H1 (cell line): ENCODE measurements at regions of chr18 and their contacts with region 1.

Region 1: DNA sequence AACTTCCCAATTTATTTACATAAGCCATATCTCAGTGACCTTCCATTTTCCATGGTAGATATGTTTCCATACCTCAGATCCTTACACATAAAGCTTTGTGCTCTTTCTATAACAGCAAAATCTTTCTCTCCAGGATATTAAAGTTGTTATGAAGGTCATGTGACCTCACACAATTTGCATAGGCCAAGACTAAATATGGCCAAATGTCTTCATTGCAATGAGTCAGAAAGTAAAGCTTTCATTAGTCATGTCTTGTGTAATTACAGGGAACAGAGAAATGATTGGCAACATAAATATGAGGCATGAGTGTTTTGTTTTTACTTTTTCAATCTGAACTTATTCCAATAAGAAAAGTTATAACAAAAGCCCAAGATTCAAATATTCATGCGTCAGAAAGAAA is 243.5 kb downstream of the ASXL3 start:
- DNase-seq: no peak
- H3K4me3 ChIP-seq: no peak overlapping the region
- H3K27ac ChIP-seq: no peak overlapping the region
- H3K4me1 ChIP-seq: no peaks in the 10 kb centered on the region
- H3K27me3 ChIP-seq: no peaks in the 10 kb centered on the region
- CTCF ChIP-seq: no peak
- EP300 ChIP-seq: no peak
- POLR2A ChIP-seq: no peak
- RAD21 ChIP-seq: no peak

Region 2: DNA sequence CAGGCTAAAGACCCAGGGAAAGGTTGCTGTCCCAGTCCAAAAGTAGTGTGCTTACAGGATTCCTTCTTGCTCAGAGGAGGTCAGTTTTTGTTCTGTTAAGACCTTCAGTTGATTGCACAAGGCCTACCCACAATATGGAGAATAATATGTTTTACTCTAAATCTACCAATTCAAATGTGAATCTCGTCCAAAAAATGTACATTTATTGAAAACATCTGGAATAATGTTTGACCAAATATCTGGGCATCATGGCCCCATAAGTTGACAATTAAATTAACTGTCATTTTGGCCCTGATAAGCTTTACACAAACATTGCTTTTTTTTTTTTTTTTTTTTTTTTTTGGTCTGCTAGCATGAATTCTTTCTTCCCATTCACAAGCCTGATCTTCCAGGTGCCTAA is 490.8 kb before region 1 on chr18:
- CTCF ChIA-PET with region 1: no interaction called
- POLR2A ChIA-PET with region 1: no interaction called
- DNase-seq: no peak
- H3K4me3 ChIP-seq: no peak overlapping the region
- H3K27ac ChIP-seq: no peak overlapping the region
- H3K4me1 ChIP-seq: no peaks in the 10 kb centered on the region
- H3K27me3 ChIP-seq: no peaks in the 10 kb centered on the region
- CTCF ChIP-seq: no peak
- EP300 ChIP-seq: no peak
- POLR2A ChIP-seq: no peak
- RAD21 ChIP-seq: no peak

Region 3: DNA sequence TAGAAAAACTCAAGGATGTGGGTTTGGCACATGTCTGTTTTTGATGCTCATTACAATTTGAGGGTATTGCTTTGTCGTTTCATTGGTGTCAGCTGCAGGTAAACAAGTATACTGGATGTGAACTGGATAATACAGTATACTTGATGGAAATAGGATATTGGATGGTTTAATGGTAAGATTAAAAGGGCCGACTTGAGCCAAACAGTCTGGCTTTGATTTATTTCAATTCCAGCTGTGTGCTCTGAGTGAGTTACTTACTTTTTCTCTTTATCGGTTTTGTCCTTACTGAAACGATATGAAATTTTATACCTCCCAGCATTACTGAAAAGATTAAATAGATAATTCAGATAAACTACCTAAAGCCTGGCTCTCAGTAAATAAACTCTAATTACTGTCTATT is 15.9 kb before region 1 on chr18:
- CTCF ChIA-PET with region 1: no interaction called
- POLR2A ChIA-PET with region 1: no interaction called
- DNase-seq: no peak
- H3K4me3 ChIP-seq: no peak overlapping the region
- H3K27ac ChIP-seq: no peak overlapping the region
- H3K4me1 ChIP-seq: no peaks in the 10 kb centered on the region
- H3K27me3 ChIP-seq: no peaks in the 10 kb centered on the region
- CTCF ChIP-seq: no peak
- EP300 ChIP-seq: no peak
- POLR2A ChIP-seq: no peak
- RAD21 ChIP-seq: no peak

Region 4: GRCh38 chr18:33833847-33834246 is 12.3 kb after region 1 on chr18:
- CTCF ChIA-PET with region 1: interaction called, 11 read pairs
- POLR2A ChIA-PET with region 1: no interaction called
- DNase-seq: no peak
- H3K4me3 ChIP-seq: no peak overlapping the region
- H3K27ac ChIP-seq: no peak overlapping the region
- H3K4me1 ChIP-seq: peaks cover 0 to 4% (median 2%) of the 10 kb centered on the region in 4 experiments; a peak in 2 of 7 replicates
- H3K27me3 ChIP-seq: no peaks in the 10 kb centered on the region
- CTCF ChIP-seq: peak in 2 of 3 experiments; percentile 13 to 31; a peak in 2 of 4 replicates
- EP300 ChIP-seq: no peak
- POLR2A ChIP-seq: no peak
- RAD21 ChIP-seq: peak; percentile 44 to 56